Transverse colon (tissue), 4 donors: ENCODE measurements at regions of chr17 and their contacts with region 1.

Region 1: GRCh38 chr17:14886240-14886639 is 378.9 kb downstream of the PMP22 start:
- DNase-seq: no peak
- H3K4me3 ChIP-seq: no peak overlapping the region
- H3K27ac ChIP-seq: no peak overlapping the region
- H3K4me1 ChIP-seq: no peaks in the 10 kb centered on the region
- H3K27me3 ChIP-seq: no peaks in the 10 kb centered on the region
- CTCF ChIP-seq: no peak
- EP300 ChIP-seq: no peak
- POLR2A ChIP-seq: no peak

Region 2: DNA sequence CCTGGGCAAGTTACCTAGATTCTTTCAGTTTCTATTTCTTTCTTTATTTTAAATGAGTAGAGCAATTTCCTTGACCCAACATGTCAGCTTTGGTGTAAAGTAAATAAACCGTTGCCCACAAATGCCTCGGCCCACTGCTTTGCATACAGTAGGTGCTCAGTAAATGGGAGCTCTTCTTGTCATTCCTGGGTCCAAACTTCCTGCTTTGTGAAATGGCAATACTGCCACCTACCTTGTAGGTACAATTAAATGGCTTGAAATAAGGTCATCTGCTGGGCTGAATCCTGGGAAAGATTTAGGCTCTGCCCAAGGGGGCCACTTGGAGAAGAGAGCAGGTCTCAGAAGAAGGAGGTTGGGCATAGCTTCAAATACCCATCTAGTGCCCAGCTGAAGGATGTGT is 332.4 kb before region 1 on chr17:
- in situ Hi-C with region 1: loop called in 1 of 4 experiments (anchors 25 kb)
- intact Hi-C with region 1: no loop called
- DNase-seq: no peak
- H3K4me3 ChIP-seq: no peak overlapping the region
- H3K27ac ChIP-seq: no peak overlapping the region
- H3K4me1 ChIP-seq: no peaks in the 10 kb centered on the region
- H3K27me3 ChIP-seq: no peaks in the 10 kb centered on the region
- CTCF ChIP-seq: no peak
- EP300 ChIP-seq: no peak
- POLR2A ChIP-seq: no peak